SK-N-SH (cell line): ENCODE measurements at regions of chr17 and their contacts with region 1.

Region 1: GRCh38 chr17:16991349-16992009 is 19.6 kb upstream of the TNFRSF13B start:
- DNase-seq: peak; percentile 91
- H3K4me3 ChIP-seq: no peak overlapping the region; a peak in 1 of 4 replicates
- H3K27ac ChIP-seq: no peak overlapping the region
- H3K4me1 ChIP-seq: no peaks in the 10 kb centered on the region
- H3K27me3 ChIP-seq: no peaks in the 10 kb centered on the region
- CTCF ChIP-seq: peak; percentile 79
- EP300 ChIP-seq: no peak
- RAD21 ChIP-seq: peak; percentile 64

Region 2: DNA sequence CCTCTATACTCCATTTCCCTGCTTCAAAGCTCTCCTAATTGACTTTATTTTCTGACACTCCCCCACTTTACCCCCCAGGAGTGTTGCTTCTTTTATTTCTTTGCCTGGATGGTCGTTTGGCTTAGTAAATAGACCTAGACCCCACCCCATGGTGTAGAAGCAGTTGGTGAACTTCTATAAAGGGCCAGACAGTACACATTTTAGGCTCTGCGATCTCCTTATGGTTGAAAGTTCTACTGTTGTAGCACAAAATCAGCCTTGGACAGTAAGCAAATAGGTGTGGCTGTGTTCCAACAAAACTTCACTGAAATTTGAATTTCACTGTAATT is 454.4 kb before region 1 on chr17:
- CTCF ChIA-PET with region 1: interaction called, 19 read pairs
- POLR2A ChIA-PET with region 1: no interaction called
- DNase-seq: no peak
- H3K4me3 ChIP-seq: peak overlapping the region in 1 of 2 experiments; percentile 70; a peak in 1 of 4 replicates
- H3K27ac ChIP-seq: no peak overlapping the region
- H3K4me1 ChIP-seq: no peaks in the 10 kb centered on the region; a peak in 1 of 4 replicates
- H3K27me3 ChIP-seq: no peaks in the 10 kb centered on the region
- CTCF ChIP-seq: no peak
- EP300 ChIP-seq: no peak
- RAD21 ChIP-seq: no peak

Region 3: GRCh38 chr17:16973760-16974540 is 17.5 kb before region 1 on chr17:
- CTCF ChIA-PET with region 1: interaction called, 38 read pairs
- POLR2A ChIA-PET with region 1: no interaction called
- DNase-seq: no peak
- H3K4me3 ChIP-seq: no peak overlapping the region
- H3K27ac ChIP-seq: no peak overlapping the region
- H3K4me1 ChIP-seq: no peaks in the 10 kb centered on the region; a peak in 1 of 4 replicates
- H3K27me3 ChIP-seq: peaks cover 19% of the 10 kb centered on the region; the same call in 1 of the 2 replicates
- CTCF ChIP-seq: no peak
- EP300 ChIP-seq: no peak
- RAD21 ChIP-seq: no peak

Region 4: GRCh38 chr17:16980813-16981731 is 10.4 kb before region 1 on chr17:
- CTCF ChIA-PET with region 1: interaction called, 38 read pairs
- POLR2A ChIA-PET with region 1: no interaction called
- DNase-seq: no peak
- H3K4me3 ChIP-seq: no peak overlapping the region
- H3K27ac ChIP-seq: no peak overlapping the region
- H3K4me1 ChIP-seq: no peaks in the 10 kb centered on the region
- H3K27me3 ChIP-seq: peaks cover 31% of the 10 kb centered on the region
- CTCF ChIP-seq: no peak
- EP300 ChIP-seq: no peak
- RAD21 ChIP-seq: no peak

Region 5: DNA sequence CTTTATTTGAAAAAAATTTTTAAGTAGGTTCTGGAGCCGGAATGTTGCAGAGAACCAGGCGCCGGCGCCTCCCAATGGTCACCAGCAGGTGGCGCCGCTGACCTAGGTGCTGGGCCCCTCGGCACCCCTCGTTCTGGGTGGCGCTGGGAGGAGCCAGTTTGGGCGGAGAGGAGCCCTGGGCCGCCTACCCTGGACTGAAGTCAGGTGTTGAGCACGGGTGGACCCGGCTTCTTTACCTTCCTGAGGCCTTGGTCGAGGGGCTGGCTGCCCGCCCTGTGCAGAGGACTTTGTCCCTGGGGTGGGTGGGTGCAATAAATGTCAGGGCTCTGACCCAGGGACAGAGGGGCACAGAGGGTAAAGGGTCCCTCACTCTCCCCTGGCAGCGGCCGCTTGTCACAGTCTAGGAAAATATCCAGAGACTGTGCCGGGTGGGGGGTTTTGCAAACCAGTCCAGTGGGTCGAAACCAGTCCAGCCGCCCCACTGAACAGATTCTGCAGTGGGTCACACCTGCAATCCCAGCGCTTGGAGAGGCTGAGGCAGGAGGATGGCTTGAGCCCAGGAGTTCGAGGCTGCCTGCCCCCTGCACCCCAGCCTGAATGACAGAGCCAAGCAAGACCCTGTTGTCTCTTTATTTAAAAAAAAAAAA is 10.5 kb after region 1 on chr17:
- CTCF ChIA-PET with region 1: interaction called, 14 read pairs
- POLR2A ChIA-PET with region 1: no interaction called
- DNase-seq: peak; percentile 92
- H3K4me3 ChIP-seq: no peak overlapping the region
- H3K27ac ChIP-seq: no peak overlapping the region
- H3K4me1 ChIP-seq: no peaks in the 10 kb centered on the region; a peak in 1 of 4 replicates
- H3K27me3 ChIP-seq: no peaks in the 10 kb centered on the region; the same call in 1 of the 2 replicates
- CTCF ChIP-seq: peak; percentile 98
- EP300 ChIP-seq: no peak
- RAD21 ChIP-seq: peak; percentile 94